Tibial artery (tissue), 4 donors: ENCODE measurements at regions of chr11 and their contacts with region 1.

Region 1: GRCh38 chr11:77619576-77620198 is 17.9 kb downstream of the CLNS1A start:
- DNase-seq: no peak
- H3K4me3 ChIP-seq: no peak overlapping the region
- H3K27ac ChIP-seq: no peak overlapping the region
- H3K4me1 ChIP-seq: no peaks in the 10 kb centered on the region
- H3K27me3 ChIP-seq: no peaks in the 10 kb centered on the region
- CTCF ChIP-seq: peak; percentile 55 to 60

Region 2: GRCh38 chr11:77981346-77981947 is 361.8 kb after region 1 on chr11:
- intact Hi-C with region 1: loop called (anchors 5 kb)
- DNase-seq: no peak
- H3K4me3 ChIP-seq: no peak overlapping the region
- H3K27ac ChIP-seq: no peak overlapping the region
- H3K4me1 ChIP-seq: no peaks in the 10 kb centered on the region
- H3K27me3 ChIP-seq: no peaks in the 10 kb centered on the region
- CTCF ChIP-seq: no peak